Activated CD4-positive, alpha-beta memory T cell treated with anti-CD3 and anti-CD28 coated beads for 36 hours (primary cell): ENCODE measurements at regions of chr18 and their contacts with region 1.

Region 1: GRCh38 chr18:21740724-21741510 is at the start of gene MIB1:
- DNase-seq: no peak
- H3K4me3 Mint-ChIP-seq: peak within 1 kb of the TSS; percentile 95
- H3K27ac Mint-ChIP-seq: peak within 1 kb of the TSS; percentile 96
- H3K4me1 Mint-ChIP-seq: peaks cover 39% of the 10 kb centered on the region
- H3K27me3 Mint-ChIP-seq: peaks cover 2% of the 10 kb centered on the region
- total RNA-seq, gene MIB1: 40.8 to 43.5 TPM

Region 2: DNA sequence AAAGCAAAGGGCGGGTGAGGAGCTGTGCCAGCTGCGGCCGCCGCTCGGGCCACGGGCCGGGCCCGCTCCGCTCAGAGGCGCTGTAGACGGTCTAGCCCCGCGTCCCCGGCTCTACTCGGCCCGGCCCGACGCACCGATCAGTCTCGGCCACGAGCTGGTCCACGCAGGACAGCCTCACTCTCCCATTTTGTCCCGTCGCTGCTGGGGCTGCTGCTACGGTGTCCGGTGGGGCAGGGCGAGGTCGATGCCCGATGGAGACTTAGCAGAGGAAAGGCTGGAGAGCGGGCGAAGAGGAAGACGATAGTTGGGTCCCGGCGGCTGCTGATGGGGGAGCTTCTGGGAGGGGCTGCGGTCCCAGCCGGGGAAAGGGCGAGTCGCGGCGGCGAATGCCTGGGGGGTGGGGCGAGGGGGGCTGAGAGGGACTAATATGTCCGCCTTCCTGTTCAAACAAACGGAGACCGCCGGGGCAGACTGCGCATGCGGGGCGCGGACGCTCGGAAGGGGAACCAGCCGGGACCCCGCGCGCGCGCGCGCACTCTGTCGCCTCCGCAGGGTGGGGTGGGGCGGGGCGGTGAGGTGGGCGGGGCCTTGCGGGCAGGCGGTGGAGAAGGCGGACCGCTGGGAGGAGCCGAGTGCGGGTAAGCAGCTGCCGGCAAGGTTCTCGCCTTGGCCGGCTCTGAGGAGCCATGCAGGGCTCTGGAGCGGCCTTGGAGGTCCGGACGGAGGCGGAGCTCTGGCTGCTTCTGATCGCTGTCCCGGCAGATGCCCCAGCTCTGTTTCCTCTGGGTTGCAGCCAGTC is 629.4 kb before region 1 on chr18 and contains the start of gene ROCK1:
- CTCF ChIA-PET with region 1: no interaction called
- POLR2A ChIA-PET with region 1: no interaction called
- intact Hi-C with region 1: loop called (anchors 1 kb)
- DNase-seq: peak; percentile 99
- H3K4me3 Mint-ChIP-seq: no peak within 1 kb of the TSS
- H3K27ac Mint-ChIP-seq: peak within 1 kb of the TSS; percentile 95
- H3K4me1 Mint-ChIP-seq: no peaks in the 10 kb centered on the region
- H3K27me3 Mint-ChIP-seq: no peaks in the 10 kb centered on the region
- total RNA-seq, gene ROCK1: 54.9 to 59.4 TPM

Region 3: DNA sequence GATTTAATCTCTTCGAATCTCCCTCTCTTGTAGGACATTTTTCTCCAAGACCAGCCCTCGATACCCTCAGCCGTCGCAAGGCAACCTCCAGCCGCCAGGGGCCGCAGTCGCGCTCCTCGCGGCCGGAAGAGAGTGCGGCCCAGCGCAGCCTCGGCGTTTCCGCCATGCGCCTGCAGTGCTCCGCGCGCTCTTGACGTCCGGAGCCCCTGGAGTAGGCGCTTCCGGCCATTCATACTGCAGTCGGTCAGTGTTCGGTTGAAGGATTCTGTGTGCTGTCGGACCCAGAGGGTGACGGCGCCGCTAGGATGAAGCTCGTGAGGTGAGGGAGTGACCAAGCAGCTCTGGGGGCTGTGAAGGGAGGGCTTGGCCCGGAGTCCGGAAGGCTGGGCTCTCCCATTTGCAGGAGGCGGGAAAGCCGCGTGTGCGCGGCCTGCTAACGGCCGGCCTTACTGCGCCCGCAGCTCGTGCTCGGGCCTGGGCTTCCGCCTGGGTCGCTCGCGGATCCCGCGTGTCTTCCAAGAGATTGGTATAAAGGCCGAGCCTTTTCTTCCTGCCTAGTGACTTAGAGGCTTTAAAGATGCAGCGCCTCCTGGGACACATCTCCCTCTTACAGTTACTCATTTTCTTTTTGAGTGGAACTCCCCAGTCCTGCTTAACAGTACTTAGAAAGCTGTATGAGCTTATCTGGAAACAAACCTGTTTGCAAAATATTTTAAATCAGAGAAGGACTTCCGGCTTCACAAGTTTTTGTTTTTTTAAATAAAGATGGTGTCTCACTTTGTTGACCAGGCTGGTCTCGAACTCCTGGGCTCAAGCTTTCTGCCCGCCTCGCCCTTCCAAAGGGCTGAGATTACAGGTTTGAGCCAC is 128.6 kb before region 1 on chr18 and contains the start of gene SNRPD1:
- CTCF ChIA-PET with region 1: interaction called, 4 read pairs
- POLR2A ChIA-PET with region 1: interaction called, 6 read pairs
- intact Hi-C with region 1: loop called (anchors 1 kb)
- DNase-seq: peak; percentile 94
- H3K4me3 Mint-ChIP-seq: peak within 1 kb of the TSS; percentile 86
- H3K27ac Mint-ChIP-seq: peak within 1 kb of the TSS; percentile 94
- H3K4me1 Mint-ChIP-seq: peaks cover 31% of the 10 kb centered on the region
- H3K27me3 Mint-ChIP-seq: no peaks in the 10 kb centered on the region
- total RNA-seq, gene SNRPD1: 153 to 164 TPM

Region 4: DNA sequence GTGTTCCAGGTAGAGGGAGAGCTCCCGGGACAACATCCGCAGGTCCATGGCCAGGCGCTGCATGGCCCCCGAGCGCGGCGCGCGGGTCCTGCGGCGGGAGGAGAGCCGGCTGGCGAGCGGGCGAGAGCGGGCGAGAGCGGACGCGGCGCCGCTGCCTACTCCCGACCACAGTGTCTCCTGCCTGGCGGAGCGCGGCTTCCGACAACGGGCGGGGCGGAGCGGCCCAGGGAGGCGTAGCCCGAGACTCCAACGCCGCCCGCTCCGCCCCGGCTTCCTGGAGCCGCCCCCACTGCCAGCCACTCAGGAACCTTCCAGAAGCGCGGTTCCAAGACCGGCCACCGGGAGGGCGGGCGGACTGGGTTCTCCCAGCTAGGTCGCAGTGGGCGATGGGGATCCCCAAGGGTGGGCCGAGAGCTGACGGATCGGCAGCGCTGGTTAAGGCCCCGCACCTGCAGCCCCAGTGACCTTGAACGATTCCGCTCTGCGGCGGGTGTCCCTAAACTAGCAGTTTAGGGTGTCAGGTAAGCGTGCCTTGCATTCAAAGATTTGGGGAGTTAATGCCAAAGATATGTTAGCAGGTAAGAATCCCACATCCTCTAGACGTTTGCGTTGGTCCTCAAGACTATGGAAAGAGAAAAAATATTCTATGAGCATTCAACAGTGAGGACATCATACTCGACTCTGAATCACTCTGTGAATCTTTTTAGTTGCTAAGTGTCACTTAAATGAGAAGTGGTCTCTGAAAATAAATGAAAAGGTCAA is 36.1 kb before region 1 on chr18 and contains the start of gene ABHD3:
- CTCF ChIA-PET with region 1: interaction called, 3 read pairs
- POLR2A ChIA-PET with region 1: interaction called, 33 read pairs
- intact Hi-C with region 1: loop called (anchors 1 kb)
- DNase-seq: peak; percentile 95
- H3K4me3 Mint-ChIP-seq: peak within 1 kb of the TSS; percentile 91
- H3K27ac Mint-ChIP-seq: peak within 1 kb of the TSS; percentile 88
- H3K4me1 Mint-ChIP-seq: peaks cover 21% of the 10 kb centered on the region
- H3K27me3 Mint-ChIP-seq: no peaks in the 10 kb centered on the region
- total RNA-seq, gene ABHD3: 18.7 to 22.1 TPM

Region 5: DNA sequence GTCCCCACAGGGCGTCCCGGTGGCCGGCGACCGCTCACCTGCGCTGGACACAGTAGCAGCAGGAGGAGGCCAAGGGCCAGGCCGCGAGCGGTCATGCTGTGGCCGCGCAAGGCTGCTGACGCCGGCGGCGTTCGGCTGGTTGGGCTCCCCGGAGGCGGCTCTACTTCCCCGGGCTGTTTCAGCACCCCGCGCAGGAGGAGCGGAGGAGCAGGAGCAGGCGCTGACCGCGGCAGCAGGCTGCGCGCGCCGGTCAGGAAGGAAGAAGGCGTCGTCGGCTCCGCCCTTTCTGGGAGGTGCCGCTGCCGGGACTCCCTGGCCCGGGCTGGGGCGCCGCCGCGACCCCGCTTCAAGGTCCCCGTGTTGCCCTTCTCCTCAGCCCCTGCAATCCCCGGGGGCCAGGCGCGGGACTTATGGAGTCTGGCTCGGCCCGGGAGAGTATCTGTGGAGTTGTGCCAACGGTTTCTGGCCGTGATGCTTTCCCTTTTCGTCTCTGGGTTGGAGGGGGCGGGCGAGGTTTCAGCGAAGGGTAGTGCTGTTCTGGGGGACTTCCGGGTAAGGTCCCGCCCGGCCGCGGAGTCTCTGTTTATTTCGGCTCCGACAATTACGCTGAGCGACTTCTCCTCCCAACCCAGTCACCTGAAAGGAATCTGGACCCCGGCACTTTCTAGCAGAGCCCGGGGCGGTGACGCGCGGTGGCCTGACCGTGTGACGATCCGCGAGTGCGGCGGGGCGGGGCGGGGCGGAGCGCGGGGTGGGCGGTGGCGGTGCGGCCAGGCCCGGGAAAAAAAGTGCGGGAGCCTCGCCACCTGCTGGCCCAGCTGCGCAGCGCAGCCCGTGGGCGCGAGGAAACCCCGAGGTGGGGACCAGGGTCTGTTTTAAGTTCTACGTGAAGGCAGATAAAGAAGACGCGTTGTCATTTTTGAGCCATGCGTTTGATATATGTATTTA is 1845.6 kb after region 1 on chr18 and contains the start of gene NPC1:
- CTCF ChIA-PET with region 1: no interaction called
- POLR2A ChIA-PET with region 1: no interaction called
- intact Hi-C with region 1: loop called (anchors 5 kb)
- DNase-seq: peak; percentile 94
- H3K4me3 Mint-ChIP-seq: peak within 1 kb of the TSS; percentile 95
- H3K27ac Mint-ChIP-seq: peak within 1 kb of the TSS; percentile 93
- H3K4me1 Mint-ChIP-seq: peaks cover 30% of the 10 kb centered on the region
- H3K27me3 Mint-ChIP-seq: peaks cover 3% of the 10 kb centered on the region
- total RNA-seq, gene NPC1: 39.3 to 39.9 TPM